Activated T-helper 1 cell treated with anti-CD3 and anti-CD28 coated beads, Interleukin-12 subunit alpha, Interleukin-12 subunit beta, Interleukin-2, Interleukin-4 antibody, amounts not matched to agents 30 ng/mL and 10 ng/mL and 1 ng/mL, durations not matched to agents 14 hours and 24 hours and 36 hours (primary cell): ENCODE measurements at regions of chr7 and their contacts with region 1.

Region 1: GRCh38 chr7:131859147-131859821 is 302.9 kb upstream of the PODXL start:
- DNase-seq: peak; percentile 3
- H3K4me3 Mint-ChIP-seq: no peak overlapping the region
- H3K27ac Mint-ChIP-seq: no peak overlapping the region
- H3K4me1 Mint-ChIP-seq: no peaks in the 10 kb centered on the region
- H3K27me3 Mint-ChIP-seq: peaks cover 3% of the 10 kb centered on the region

Region 2: GRCh38 chr7:131688738-131689661 is 170.3 kb before region 1 on chr7:
- intact Hi-C with region 1: loop called (anchors 2 kb)
- DNase-seq: peak; percentile 22
- H3K4me3 Mint-ChIP-seq: no peak overlapping the region
- H3K27ac Mint-ChIP-seq: no peak overlapping the region
- H3K4me1 Mint-ChIP-seq: peaks cover 7% of the 10 kb centered on the region
- H3K27me3 Mint-ChIP-seq: peaks cover 3% of the 10 kb centered on the region

Region 3: DNA sequence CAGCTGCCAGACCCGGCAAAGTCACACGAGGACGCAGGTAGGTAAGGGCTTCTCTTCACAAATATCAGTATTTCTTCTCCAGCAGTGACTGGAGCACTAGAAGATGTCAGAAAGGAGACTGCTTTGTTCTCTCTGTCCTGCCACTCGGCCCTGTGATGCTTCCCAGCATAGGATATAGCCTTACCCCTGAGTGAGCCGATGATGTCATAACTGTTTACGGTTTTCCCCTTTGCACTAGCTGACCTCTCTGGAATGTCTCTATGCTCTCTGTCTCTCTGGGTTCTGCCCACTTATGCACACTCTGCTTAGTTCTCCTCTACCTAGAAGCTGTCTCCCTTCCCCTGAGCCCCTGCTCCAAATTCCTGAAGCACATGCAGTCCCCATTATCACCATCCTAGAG is 135.4 kb before region 1 on chr7:
- intact Hi-C with region 1: no loop called
- DNase-seq: no peak
- H3K4me3 Mint-ChIP-seq: no peak overlapping the region
- H3K27ac Mint-ChIP-seq: no peak overlapping the region
- H3K4me1 Mint-ChIP-seq: no peaks in the 10 kb centered on the region
- H3K27me3 Mint-ChIP-seq: peaks cover 4% of the 10 kb centered on the region

Region 4: GRCh38 chr7:132138817-132139216 is 279.5 kb after region 1 on chr7:
- intact Hi-C with region 1: no loop called
- DNase-seq: no peak
- H3K4me3 Mint-ChIP-seq: no peak overlapping the region
- H3K27ac Mint-ChIP-seq: no peak overlapping the region
- H3K4me1 Mint-ChIP-seq: no peaks in the 10 kb centered on the region
- H3K27me3 Mint-ChIP-seq: peaks cover 5% of the 10 kb centered on the region